K562 (cell line): ENCODE measurements at regions of chr21 and their contacts with region 1.

Region 1: DNA sequence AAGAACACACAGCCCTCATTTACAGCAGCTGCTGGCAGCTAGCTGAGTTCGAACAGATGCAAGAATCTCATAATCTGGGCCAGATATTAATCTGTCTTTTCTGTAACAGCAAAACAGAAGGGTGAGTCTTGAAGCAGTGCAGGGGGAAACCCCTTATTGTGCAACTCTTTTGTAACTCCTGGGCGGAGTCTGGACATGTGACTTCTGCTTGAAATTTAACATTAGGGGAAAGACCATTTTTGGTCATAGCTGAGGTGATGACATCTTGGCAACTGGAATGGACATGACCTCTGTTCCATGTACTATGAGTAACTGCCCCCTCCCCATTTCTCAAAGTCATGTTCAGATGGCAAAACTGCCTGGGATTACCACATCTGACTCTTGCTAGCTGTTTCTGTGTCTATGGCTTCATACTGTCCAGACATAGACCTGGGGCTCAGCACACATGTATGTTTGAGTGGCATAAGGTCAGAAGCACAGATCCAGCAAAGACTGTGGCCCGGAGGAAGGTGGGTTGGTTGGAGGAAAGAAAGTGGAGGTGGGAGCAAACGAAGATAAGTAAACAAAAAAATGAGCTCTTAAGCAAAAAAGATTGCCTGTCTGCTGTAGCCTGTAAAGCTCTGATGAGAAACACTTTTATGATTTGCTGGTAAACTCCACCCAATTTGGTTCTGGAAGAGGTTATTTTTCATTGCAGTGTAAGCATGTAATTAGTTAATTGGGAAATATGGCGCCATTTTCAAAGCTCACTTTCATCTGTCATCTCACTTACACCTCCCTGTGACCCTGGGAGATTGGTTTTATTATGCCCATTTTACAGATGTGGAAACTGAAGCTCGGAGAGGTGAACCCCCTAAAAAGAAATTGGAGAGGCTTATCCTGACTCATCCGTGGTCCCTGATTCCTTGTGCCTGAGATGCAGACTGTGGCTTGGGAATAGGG is 26.1 kb downstream of the ETS2 start:
- DNase-seq: peak in 2 of 4 experiments; percentile 52 to 79
- ATAC-seq: peak; percentile 94
- H3K4me3 ChIP-seq: no peak overlapping the region
- H3K27ac ChIP-seq: peak overlapping the region; percentile 71; the same call in 2 of the 3 replicates
- H3K4me1 ChIP-seq: peaks cover 0 to 25% of the 10 kb centered on the region in 2 experiments; a peak in 3 of 5 replicates
- H3K27me3 ChIP-seq: no peaks in the 10 kb centered on the region
- CTCF ChIP-seq: no peak
- EP300 ChIP-seq: peak; percentile 85; the same call in 1 of the 2 replicates
- POLR2A ChIP-seq: no peak
- RAD21 ChIP-seq: peak in 1 of 2 experiments; percentile 3; a peak in 2 of 4 replicates

Region 2: DNA sequence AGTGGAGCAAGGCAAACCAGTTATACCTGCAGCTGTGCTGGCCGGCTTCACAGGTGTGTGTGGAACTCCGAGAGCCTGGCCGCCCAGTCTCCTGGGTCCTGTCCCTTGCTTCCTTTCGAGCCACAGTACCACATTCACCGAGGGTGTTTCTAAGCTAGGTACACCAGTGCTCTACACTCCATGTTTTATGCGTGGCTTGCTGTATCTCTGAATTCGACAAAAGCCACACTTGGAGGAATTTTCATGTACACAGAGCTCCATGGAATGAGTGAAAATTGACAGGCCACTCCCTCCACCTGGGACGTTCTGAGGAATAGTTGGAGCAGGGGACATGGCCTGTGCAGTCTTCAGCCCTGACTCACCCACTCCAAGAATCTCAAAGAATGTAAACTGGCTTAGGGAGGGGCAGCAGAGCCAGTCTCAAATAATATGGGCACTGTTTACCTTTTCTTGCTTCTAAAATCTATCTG is 12.0 kb before region 1 on chr21:
- CTCF ChIA-PET with region 1: no interaction called
- POLR2A ChIA-PET with region 1: interaction called, 15 read pairs
- in situ Hi-C with region 1: no loop called
- intact Hi-C with region 1: no loop called
- DNase-seq: no peak
- ATAC-seq: no peak
- H3K4me3 ChIP-seq: no peak overlapping the region
- H3K27ac ChIP-seq: no peak overlapping the region
- H3K4me1 ChIP-seq: no peaks in the 10 kb centered on the region
- H3K27me3 ChIP-seq: no peaks in the 10 kb centered on the region
- CTCF ChIP-seq: no peak
- EP300 ChIP-seq: no peak
- POLR2A ChIP-seq: no peak
- RAD21 ChIP-seq: no peak